ENCODE measurements at regions of chr7 and their contacts with region 1.

Region 1: DNA sequence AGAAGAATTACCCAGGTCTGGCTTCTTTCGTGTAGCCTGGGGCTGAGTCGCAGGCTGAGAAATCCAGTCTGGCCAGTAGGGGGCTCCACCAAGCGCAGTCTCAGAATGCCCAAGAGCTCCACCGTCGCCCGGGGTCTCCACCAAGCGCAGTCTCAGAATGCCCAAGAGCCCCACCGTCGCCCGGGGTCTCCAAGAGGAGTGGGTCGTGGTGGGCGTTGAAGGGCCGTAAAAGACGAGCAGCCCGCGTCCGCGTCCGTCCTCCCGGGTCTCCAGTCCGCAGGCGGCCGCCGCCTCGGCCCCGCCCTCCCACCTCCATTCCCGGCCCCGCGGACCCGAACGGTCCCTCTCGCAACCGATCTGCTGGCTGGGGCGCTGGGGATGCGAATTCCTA is 895 bp upstream of the ZYX start:
- DNase-seq: peak; percentile 90
- H3K4me3 Mint-ChIP-seq: peak overlapping the region; percentile 83
- H3K27ac Mint-ChIP-seq: peak overlapping the region; percentile 91
- H3K4me1 Mint-ChIP-seq: peaks cover 43% of the 10 kb centered on the region
- H3K27me3 Mint-ChIP-seq: no peaks in the 10 kb centered on the region

Region 2: GRCh38 chr7:143263266-143264195 is 116.7 kb before region 1 on chr7 and contains the start of gene GSTK1:
- CTCF ChIA-PET with region 1: interaction called, 7 read pairs
- POLR2A ChIA-PET with region 1: interaction called, 23 read pairs
- DNase-seq: peak; percentile 86
- H3K4me3 Mint-ChIP-seq: peak within 1 kb of the TSS; percentile 97
- H3K27ac Mint-ChIP-seq: peak within 1 kb of the TSS; percentile 87
- H3K4me1 Mint-ChIP-seq: peaks cover 73% of the 10 kb centered on the region
- H3K27me3 Mint-ChIP-seq: no peaks in the 10 kb centered on the region
- total RNA-seq, gene GSTK1: 502 to 518 TPM

Region 3: DNA sequence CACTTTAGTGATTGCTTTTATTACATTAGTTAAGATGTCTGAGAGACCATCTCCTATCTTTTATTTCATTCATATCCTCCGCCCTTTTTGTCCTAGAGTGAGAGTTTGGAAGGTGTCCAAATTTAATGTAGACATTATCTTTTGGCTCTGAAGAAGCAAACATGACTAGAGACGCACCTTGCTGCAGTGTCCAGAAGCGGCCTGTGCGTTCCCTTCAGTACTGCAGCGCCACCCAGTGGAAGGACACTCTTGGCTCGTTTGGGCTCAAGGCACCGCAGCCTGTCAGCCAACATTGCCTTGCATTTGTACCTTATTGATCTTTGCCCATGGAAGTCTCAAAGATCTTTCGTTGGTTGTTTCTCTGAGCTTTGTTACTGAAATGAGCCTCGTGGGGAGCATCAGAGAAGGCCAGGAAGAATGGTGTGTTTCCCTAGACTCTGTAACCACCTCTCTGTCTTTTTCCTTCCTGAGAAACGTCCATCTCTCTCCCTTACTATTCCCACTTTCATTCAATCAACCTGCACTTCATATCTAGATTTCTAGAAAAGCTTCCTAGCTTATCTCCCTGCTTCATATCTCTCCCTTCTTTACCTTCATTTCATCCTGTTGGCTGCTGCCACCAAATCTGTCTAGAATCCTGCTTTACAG is 74.7 kb before region 1 on chr7:
- CTCF ChIA-PET with region 1: interaction called, 36 read pairs
- POLR2A ChIA-PET with region 1: interaction called, 12 read pairs
- DNase-seq: peak; percentile 76
- H3K4me3 Mint-ChIP-seq: no peak overlapping the region
- H3K27ac Mint-ChIP-seq: peak overlapping the region; percentile 61
- H3K4me1 Mint-ChIP-seq: peaks cover 75% of the 10 kb centered on the region
- H3K27me3 Mint-ChIP-seq: no peaks in the 10 kb centered on the region

Region 4: DNA sequence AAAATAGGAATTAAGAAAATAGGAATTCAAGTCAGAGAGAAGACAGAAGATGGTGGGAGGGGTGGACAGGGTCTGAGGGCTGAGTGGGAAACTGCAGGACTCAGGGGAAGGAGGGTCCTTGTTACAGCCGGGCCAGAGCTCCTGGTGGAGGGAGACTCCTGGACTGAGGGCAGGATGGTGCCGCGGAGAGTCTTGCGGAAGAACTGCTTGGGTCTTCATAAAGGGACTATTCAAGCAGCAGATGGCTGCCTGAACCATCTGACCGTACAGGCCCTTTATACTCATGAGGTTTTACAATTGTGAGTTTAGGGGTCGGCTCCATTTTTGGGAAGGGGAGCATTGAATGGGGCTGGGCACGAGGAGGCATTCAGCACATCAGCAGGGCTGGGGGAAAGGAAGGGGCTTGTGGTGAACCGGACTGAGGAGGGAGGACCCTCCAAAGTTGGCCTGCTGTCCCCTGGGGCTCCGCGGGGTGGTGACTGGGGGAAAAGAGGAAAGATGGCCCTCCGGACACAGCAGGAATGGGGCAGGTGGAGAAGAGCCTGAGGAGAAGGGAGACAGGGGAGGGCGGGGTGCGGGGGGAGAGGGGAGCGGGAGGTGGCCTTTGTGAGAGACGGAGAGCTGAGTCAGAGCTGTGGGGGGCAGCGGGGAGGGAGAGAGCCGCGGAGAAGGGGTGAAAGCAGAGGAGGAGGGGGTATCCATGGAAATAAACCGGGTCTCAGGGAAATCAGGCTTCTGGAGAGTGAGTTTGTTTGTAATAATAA is 19.3 kb before region 1 on chr7:
- CTCF ChIA-PET with region 1: interaction called, 10 read pairs
- POLR2A ChIA-PET with region 1: interaction called, 10 read pairs
- DNase-seq: no peak
- H3K4me3 Mint-ChIP-seq: peak overlapping the region; percentile 56
- H3K27ac Mint-ChIP-seq: no peak overlapping the region
- H3K4me1 Mint-ChIP-seq: peaks cover 10% of the 10 kb centered on the region
- H3K27me3 Mint-ChIP-seq: peaks cover 58% of the 10 kb centered on the region

Region 5: DNA sequence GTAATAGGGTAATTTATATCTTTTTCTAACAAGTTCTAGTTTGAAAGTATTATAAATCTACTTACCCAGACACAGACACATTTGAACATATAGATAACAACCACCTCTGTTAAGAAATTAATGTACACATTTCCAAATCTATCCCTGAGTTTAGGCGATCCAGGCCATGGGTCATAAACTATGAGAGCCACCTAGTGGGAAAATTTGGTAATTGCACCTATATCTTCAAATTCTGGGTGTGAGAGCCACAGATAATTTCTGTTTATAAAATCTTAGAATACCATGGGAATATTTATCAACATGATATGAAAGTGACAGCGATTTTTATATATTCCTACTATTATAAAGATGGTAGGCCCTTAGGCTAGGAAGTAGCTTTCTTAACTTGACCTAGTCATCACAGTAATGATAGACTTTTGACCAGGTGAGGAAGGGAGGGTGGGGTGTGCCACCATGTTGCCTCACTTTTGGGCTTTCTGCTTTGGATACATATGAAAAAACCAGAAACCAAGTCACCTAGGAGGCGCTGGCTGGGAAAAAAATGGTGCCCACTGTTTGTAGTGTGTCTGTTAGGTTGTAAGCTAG is 36.4 kb after region 1 on chr7:
- CTCF ChIA-PET with region 1: interaction called, 24 read pairs
- POLR2A ChIA-PET with region 1: interaction called, 4 read pairs
- DNase-seq: peak; percentile 13
- H3K4me3 Mint-ChIP-seq: no peak overlapping the region
- H3K27ac Mint-ChIP-seq: no peak overlapping the region
- H3K4me1 Mint-ChIP-seq: no peaks in the 10 kb centered on the region
- H3K27me3 Mint-ChIP-seq: peaks cover 3% of the 10 kb centered on the region